Caco-2 (cell line): ENCODE measurements at regions of chr21 and their contacts with region 1.

Region 1: DNA sequence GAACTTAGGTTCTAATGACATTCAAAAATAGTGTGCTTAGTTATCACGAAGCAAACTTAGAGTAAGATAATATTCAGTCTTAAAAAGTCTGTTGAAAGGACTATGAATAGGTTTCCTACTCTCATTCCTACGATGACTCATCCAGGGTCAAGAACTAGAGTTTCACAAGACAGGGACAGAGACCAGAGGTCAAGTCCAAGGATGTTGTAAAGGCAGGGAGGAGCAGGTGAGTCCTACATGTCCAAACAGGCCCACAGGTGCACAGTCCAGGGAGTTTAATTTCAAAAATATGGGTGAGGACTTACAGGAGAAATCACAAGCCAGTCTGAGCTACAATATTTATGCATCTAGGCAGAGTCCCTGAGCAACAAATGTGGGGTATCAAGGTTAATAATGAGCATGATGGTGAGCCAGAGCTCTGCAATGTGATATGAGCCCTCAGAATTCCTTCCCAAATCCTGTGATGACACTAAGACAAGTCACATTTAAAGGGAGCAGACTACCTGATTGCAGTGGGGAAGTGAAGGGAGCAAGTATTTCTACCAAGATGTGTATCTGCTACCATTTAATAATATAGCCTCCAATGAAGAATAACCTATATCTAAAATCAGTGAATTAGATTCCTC is 100.0 kb upstream of the NRIP1 start:
- DNase-seq: peak in 1 of 2 experiments; percentile 28
- H3K4me3 ChIP-seq: no peak overlapping the region
- H3K4me3 Mint-ChIP-seq: no peak overlapping the region
- H3K27ac Mint-ChIP-seq: no peak overlapping the region
- H3K4me1 ChIP-seq: peaks cover 5% of the 10 kb centered on the region; the same call in 1 of the 2 replicates
- H3K4me1 Mint-ChIP-seq: peaks cover 7% of the 10 kb centered on the region
- H3K27me3 ChIP-seq: no peaks in the 10 kb centered on the region
- H3K27me3 Mint-ChIP-seq: no peaks in the 10 kb centered on the region
- CTCF ChIP-seq: no peak

Region 2: GRCh38 chr21:15138490-15138889 is 26.3 kb before region 1 on chr21:
- CTCF ChIA-PET with region 1: no interaction called
- POLR2A ChIA-PET with region 1: no interaction called
- intact Hi-C with region 1: no loop called
- DNase-seq: no peak
- H3K4me3 ChIP-seq: no peak overlapping the region
- H3K4me3 Mint-ChIP-seq: no peak overlapping the region
- H3K27ac Mint-ChIP-seq: peak overlapping the region; percentile 84
- H3K4me1 ChIP-seq: peaks cover 53% of the 10 kb centered on the region
- H3K4me1 Mint-ChIP-seq: peaks cover 44% of the 10 kb centered on the region
- H3K27me3 ChIP-seq: no peaks in the 10 kb centered on the region
- H3K27me3 Mint-ChIP-seq: no peaks in the 10 kb centered on the region
- CTCF ChIP-seq: no peak

Region 3: DNA sequence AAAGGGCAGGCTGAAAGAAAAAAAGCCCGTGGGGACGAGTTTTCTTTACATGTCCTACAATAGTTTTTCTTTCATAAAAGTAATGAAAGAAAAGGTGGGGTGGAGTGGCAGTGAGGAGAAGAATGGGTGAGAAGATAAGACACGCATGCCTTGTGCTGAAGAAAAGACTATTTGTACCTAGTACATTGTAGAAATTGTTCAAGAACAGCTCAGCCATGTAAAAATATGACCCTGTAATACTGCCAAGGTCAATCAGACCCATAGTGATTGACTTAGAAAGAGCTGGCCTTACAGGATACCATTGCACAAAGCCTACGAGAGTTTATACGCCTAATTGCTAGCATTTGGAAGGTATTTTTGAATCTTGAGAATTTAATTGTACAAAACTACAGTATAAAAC is 26.0 kb after region 1 on chr21:
- CTCF ChIA-PET with region 1: no interaction called
- POLR2A ChIA-PET with region 1: no interaction called
- intact Hi-C with region 1: loop called (anchors 2 kb)
- DNase-seq: no peak
- H3K4me3 ChIP-seq: no peak overlapping the region
- H3K4me3 Mint-ChIP-seq: no peak overlapping the region
- H3K27ac Mint-ChIP-seq: no peak overlapping the region
- H3K4me1 ChIP-seq: peaks cover 6% of the 10 kb centered on the region
- H3K4me1 Mint-ChIP-seq: peaks cover 16% of the 10 kb centered on the region
- H3K27me3 ChIP-seq: no peaks in the 10 kb centered on the region
- H3K27me3 Mint-ChIP-seq: no peaks in the 10 kb centered on the region
- CTCF ChIP-seq: no peak